SK-N-SH (cell line): ENCODE measurements at regions of chr15 and their contacts with region 1.

Region 1: DNA sequence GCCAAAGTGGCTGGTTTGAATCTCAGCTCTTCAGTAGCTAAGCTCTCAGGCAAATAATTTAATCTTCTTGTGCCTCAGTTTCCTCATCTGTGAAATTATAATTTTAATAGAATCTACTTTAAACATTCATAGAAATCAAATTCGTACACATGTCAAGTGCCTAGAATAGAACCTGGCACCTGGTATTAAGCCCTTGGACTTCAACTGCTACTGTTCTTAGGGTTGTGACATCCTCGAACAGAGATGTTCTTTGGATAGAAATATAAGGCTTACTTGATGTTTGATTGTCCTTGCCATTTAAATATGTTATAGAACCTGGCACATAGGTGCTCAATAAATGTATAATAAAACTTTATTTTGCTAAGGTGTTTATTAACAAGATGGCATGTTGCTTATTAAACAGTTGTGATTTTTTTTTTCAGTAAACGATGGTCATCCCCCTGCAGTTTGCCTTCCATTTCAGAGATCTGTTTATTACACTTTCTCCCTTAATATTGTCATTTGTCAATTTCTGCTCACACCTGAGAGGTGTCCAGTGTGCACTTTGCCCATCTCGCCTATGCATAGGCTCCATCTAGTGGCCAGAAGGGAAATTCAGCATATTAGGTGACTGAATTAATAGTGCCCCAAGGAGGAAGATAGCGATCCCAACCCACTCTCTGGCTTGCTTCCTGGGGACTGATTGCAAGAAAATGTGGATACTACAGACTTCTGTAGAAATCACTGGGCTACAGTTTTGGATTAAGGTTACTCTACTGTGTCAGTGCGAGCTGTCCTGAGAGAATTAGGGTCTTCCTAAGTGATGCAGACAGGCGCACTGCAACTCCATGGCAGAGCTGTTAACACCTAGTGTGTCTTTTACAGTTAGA is 10.7 kb downstream of the IGF1R start:
- DNase-seq: peak; percentile 75
- H3K4me3 ChIP-seq: no peak overlapping the region
- H3K27ac ChIP-seq: no peak overlapping the region
- H3K4me1 ChIP-seq: peaks cover 0 to 30% of the 10 kb centered on the region in 2 experiments; a peak in 2 of 4 replicates
- H3K27me3 ChIP-seq: no peaks in the 10 kb centered on the region
- CTCF ChIP-seq: peak; percentile 94
- EP300 ChIP-seq: no peak
- RAD21 ChIP-seq: peak; percentile 75

Region 2: DNA sequence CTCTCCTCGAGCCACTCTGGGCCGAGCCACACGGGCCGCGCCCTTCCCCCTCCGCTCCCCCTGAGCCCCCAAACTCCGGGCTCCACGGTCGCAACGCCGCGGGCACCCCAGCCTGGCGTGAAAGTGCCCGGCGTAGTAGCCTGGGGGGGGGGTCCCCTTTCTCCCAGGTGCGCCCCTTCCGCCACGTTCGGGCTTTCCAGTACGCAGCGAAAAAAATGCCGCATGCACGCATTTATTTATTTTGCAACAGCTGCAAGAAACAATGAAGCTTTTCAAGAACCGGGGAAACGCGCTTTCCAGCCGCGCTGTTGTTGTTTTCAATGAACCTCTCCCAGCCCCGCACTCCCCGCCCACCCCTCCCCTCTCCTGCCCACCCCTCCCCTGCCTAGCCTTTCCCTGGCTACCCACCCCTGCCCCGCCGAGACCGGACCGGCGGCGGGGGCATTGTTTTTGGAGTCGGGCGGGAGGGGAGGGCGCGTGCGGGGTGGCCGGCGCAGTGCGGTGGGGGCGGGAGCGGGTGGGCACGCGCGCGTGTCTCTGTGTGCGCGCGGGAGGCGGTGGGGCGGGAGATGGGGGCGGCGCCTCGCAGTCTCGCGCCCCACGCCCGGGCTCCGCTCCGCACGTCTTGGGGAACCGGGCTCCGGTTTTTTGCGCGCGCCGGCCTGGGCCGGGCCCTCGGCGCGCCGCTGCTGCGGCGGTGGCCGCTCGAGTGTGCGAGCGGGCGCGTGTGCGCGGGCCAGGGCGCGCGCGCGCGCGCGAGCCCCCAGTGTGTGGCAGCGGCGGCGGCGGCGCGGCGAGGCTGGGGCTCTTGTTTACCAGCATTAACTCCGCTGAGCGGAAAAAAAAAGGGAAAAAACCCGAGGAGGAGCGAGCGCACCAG is 11.1 kb before region 1 on chr15 and contains the start of gene IGF1R:
- CTCF ChIA-PET with region 1: interaction called, 51 read pairs
- POLR2A ChIA-PET with region 1: no interaction called
- DNase-seq: peak; percentile 94
- H3K4me3 ChIP-seq: peak within 1 kb of the TSS; percentile 78 to 92
- H3K27ac ChIP-seq: peak within 1 kb of the TSS; percentile 76 to 89
- H3K4me1 ChIP-seq: peaks cover 4 to 5% of the 10 kb centered on the region in 2 experiments; a peak in 3 of 4 replicates
- H3K27me3 ChIP-seq: peaks cover 9% of the 10 kb centered on the region; the same call in 1 of the 2 replicates
- CTCF ChIP-seq: no peak
- EP300 ChIP-seq: no peak
- RAD21 ChIP-seq: no peak
- polyA plus RNA-seq, gene IGF1R: 6.4 and 9.5 TPM in 2 replicates

Region 3: DNA sequence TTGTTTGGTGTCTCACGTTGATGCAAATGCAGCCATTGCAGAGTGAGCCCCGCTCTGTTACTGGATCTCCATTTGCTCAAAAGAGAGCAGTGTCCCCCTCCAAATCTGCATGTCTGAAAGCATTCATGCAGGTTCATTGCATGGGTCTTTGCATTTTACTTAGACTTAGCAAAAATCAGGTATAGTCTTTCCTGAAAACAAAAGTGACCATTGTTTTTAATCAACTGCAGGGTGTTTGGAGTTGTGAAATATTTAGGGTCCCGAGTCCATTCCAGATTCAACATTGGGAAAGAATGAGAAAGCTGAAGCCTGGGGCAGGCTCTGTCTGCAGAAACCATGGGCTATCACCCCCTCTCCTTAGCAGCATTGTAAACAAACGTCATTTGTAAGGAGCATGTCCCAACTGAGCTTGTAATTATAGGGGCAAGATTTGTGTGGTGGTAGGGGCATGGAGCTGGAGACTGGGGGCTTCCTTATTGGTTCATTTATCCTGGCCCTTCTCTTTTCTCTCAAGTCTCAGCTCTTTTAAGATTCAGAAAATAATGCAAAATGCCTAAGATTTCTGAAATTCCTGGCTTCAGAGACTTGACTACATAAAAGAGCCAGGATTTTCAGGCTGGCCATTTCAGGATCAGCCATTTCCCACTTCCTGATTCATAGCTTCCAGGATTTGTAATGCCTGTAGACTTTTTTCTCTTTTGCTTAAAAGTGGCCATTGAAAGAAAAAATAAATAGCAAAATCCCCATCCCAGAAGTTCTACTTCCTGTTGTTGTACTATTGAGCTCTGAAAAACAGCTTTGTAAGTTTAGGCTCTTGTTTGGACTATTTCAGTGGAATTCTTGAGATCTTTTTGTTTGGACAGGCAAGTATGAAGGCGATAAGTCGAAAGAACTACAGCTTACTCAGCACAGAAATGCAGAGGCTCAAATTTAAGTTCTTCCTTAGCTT is 12.3 kb after region 1 on chr15:
- CTCF ChIA-PET with region 1: interaction called, 40 read pairs
- POLR2A ChIA-PET with region 1: no interaction called
- DNase-seq: no peak
- H3K4me3 ChIP-seq: no peak overlapping the region
- H3K27ac ChIP-seq: peak overlapping the region; percentile 36 to 55; a peak in 3 of 4 replicates
- H3K4me1 ChIP-seq: peaks cover 38 to 39% of the 10 kb centered on the region in 2 experiments; a peak in 3 of 4 replicates
- H3K27me3 ChIP-seq: no peaks in the 10 kb centered on the region
- CTCF ChIP-seq: no peak
- EP300 ChIP-seq: no peak
- RAD21 ChIP-seq: no peak